ENCODE measurements at regions of chr2 and their contacts with region 1.

Region 1: GRCh38 chr2:222707689-222708525 is 36.4 kb downstream of the MOGAT1 start:
- DNase-seq: no peak
- H3K4me3 ChIP-seq: no peak overlapping the region
- H3K27ac ChIP-seq: no peak overlapping the region
- H3K27me3 ChIP-seq: no peaks in the 10 kb centered on the region
- CTCF ChIP-seq: peak; percentile 89

Region 2: DNA sequence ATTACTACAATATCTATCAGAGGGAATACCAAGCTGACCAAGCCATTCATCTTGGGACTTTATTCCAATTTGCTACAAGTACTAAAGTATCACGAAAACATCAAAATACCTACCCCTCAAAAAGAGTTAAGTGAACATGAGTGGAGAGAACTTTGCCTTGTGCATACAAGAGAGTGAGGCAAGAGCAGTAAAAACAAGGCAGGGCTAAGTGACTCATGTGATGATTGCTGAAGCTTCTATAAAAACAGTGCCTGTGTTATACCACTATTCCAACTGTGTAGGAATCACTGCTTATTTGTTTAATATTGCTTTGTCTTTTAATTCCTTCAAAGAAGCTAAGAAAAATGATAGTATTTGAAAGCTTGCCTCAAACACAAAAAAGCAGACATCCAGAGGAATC is 113.2 kb before region 1 on chr2:
- CTCF ChIA-PET with region 1: no interaction called
- POLR2A ChIA-PET with region 1: no interaction called
- DNase-seq: peak; percentile 30
- H3K4me3 ChIP-seq: no peak overlapping the region
- H3K27ac ChIP-seq: no peak overlapping the region
- H3K27me3 ChIP-seq: no peaks in the 10 kb centered on the region
- CTCF ChIP-seq: no peak

Region 3: DNA sequence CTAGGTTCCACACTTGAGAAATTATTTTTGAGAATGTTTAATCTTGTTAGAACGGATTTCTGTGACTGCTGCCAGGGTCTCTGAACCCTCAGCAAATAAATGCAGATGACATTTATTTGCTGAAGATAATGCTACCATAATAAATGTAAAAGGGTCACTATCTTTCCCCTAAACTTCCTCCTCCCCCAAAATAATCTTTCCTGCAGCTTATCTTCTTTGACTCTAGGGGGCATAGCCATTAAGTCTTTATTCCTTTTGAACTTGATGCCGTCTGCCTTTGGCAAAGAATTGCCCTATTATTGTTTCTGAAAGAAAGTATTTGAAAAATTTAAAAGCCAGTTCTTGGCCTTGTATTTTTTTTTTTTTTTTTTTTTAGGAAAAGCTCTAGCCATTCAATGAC is 89.4 kb after region 1 on chr2:
- CTCF ChIA-PET with region 1: interaction called, 11 read pairs
- POLR2A ChIA-PET with region 1: no interaction called
- DNase-seq: no peak
- H3K4me3 ChIP-seq: no peak overlapping the region
- H3K27ac ChIP-seq: no peak overlapping the region
- H3K27me3 ChIP-seq: no peaks in the 10 kb centered on the region
- CTCF ChIP-seq: peak; percentile 63

Region 4: DNA sequence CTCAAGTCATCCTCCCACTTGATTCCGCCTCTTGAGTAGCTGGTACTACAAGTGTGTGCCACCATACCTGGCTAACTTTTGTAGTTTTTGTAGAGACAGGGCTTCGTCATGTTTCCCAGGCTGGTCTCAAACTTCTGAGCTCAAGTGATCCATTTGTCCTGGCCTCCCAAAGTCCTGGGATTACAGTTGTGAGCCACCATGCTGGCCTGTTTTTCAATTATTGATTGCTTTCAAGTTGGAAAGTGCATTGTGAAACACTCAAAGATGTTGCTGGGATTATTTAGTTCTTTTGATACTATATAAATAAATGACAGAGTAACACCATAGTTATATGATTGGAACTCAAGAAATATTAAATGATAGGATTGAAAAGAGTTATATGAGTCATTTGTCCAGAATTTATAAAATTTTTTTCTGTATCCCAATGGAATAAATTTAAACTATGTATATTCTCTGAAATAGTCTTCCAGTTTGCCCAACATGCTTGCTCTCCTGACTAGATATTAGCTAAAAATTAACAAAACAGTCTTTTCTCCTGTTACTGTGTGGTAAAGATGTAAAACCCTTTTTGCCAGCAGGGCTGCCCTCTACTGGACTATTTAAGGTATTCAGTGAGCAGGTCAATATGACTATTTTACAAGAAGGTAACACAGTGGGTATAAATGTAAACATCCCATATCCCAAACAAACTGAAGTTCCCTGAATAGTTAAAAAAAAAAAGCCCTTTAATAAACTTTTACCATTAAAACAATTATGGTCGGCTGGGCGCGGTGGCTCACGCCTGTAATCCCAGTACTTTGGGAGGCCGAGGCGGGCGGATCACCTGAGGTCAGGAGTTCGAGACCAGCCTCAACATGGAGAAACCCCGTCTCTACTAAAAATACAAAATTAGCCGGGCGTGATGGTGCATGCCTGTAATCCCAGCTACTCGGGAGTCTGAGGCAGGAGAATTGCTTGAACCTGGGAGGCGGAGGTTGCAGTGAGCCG is 195.6 kb after region 1 on chr2:
- CTCF ChIA-PET with region 1: interaction called, 68 read pairs
- POLR2A ChIA-PET with region 1: no interaction called
- DNase-seq: no peak
- H3K4me3 ChIP-seq: no peak overlapping the region
- H3K27ac ChIP-seq: peak overlapping the region; percentile 77
- H3K27me3 ChIP-seq: no peaks in the 10 kb centered on the region
- CTCF ChIP-seq: peak; percentile 67

Region 5: GRCh38 chr2:222939208-222939856 is 231.4 kb after region 1 on chr2:
- CTCF ChIA-PET with region 1: interaction called, 19 read pairs
- POLR2A ChIA-PET with region 1: no interaction called
- DNase-seq: no peak
- H3K4me3 ChIP-seq: no peak overlapping the region
- H3K27ac ChIP-seq: no peak overlapping the region
- H3K27me3 ChIP-seq: no peaks in the 10 kb centered on the region
- CTCF ChIP-seq: peak; percentile 83